Dendritic cell treated with granulocyte-macrophage colony-stimulating factor and Interleukin-4, amounts not matched to agents 40 ng/mL and 50 ng/mL, for 4 days (primary cell): ENCODE measurements at regions of chr1 and their contacts with region 1.

Region 1: GRCh38 chr1:85259118-85259911 is at the start of gene C1orf52:
- H3K4me3 Mint-ChIP-seq: peak within 1 kb of the TSS; percentile 100
- H3K27ac Mint-ChIP-seq: peak within 1 kb of the TSS; percentile 98
- H3K4me1 Mint-ChIP-seq: peaks cover 28% of the 10 kb centered on the region
- H3K27me3 Mint-ChIP-seq: no peaks in the 10 kb centered on the region

Region 2: GRCh38 chr1:84944767-84945486 is 314.4 kb before region 1 on chr1:
- intact Hi-C with region 1: loop called (anchors 1 kb)
- H3K4me3 Mint-ChIP-seq: peak overlapping the region; percentile 61
- H3K27ac Mint-ChIP-seq: peak overlapping the region; percentile 73
- H3K4me1 Mint-ChIP-seq: peaks cover 9% of the 10 kb centered on the region
- H3K27me3 Mint-ChIP-seq: peaks cover 5% of the 10 kb centered on the region

Region 3: DNA sequence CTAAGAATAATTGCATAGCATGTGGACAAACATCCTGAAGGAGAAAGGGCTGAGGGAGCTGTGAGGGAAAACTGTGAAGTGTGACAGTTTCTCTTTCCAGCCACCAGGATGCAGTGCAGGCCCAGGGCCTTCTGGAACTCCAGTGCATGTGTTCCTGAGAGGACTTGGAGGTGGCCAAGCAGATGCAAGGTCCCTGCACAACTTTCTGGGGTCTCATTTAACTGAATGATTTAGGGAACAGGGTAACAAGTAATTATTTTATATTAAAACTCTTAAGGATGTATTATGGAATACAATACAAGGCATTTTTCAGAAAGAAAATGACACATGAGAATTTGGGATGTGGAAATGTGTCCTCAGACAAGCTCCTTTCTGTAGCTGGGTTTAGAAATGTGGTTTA is 149.8 kb before region 1 on chr1:
- intact Hi-C with region 1: loop called (anchors 1 kb)
- H3K4me3 Mint-ChIP-seq: no peak overlapping the region
- H3K27ac Mint-ChIP-seq: no peak overlapping the region
- H3K4me1 Mint-ChIP-seq: no peaks in the 10 kb centered on the region
- H3K27me3 Mint-ChIP-seq: no peaks in the 10 kb centered on the region

Region 4: GRCh38 chr1:85200870-85201339 is 58.4 kb before region 1 on chr1 and contains the start of gene SYDE2:
- intact Hi-C with region 1: loop called (anchors 5 kb)
- H3K4me3 Mint-ChIP-seq: peak within 1 kb of the TSS; percentile 84
- H3K27ac Mint-ChIP-seq: no peak within 1 kb of the TSS
- H3K4me1 Mint-ChIP-seq: peaks cover 13% of the 10 kb centered on the region
- H3K27me3 Mint-ChIP-seq: peaks cover 46% of the 10 kb centered on the region

Region 5: GRCh38 chr1:85276215-85276977 is 17.1 kb after region 1 on chr1 and contains the start of gene BCL10:
- intact Hi-C with region 1: loop called (anchors 1 kb)
- H3K4me3 Mint-ChIP-seq: peak within 1 kb of the TSS; percentile 97
- H3K27ac Mint-ChIP-seq: peak within 1 kb of the TSS; percentile 99
- H3K4me1 Mint-ChIP-seq: peaks cover 56% of the 10 kb centered on the region
- H3K27me3 Mint-ChIP-seq: peaks cover 5% of the 10 kb centered on the region

Region 6: GRCh38 chr1:85297855-85298629 is 38.7 kb after region 1 on chr1:
- intact Hi-C with region 1: no loop called
- H3K4me3 Mint-ChIP-seq: no peak overlapping the region
- H3K27ac Mint-ChIP-seq: no peak overlapping the region
- H3K4me1 Mint-ChIP-seq: no peaks in the 10 kb centered on the region
- H3K27me3 Mint-ChIP-seq: peaks cover 6% of the 10 kb centered on the region

Region 7: GRCh38 chr1:85360730-85361493 is 101.6 kb after region 1 on chr1:
- intact Hi-C with region 1: no loop called
- H3K4me3 Mint-ChIP-seq: no peak overlapping the region
- H3K27ac Mint-ChIP-seq: no peak overlapping the region
- H3K4me1 Mint-ChIP-seq: no peaks in the 10 kb centered on the region
- H3K27me3 Mint-ChIP-seq: no peaks in the 10 kb centered on the region

Region 8: GRCh38 chr1:86596741-86597290 is 1337.5 kb after region 1 on chr1:
- intact Hi-C with region 1: no loop called
- H3K4me3 Mint-ChIP-seq: no peak overlapping the region
- H3K27ac Mint-ChIP-seq: no peak overlapping the region
- H3K4me1 Mint-ChIP-seq: no peaks in the 10 kb centered on the region
- H3K27me3 Mint-ChIP-seq: no peaks in the 10 kb centered on the region